IMR-90 (cell line): ENCODE measurements at regions of chr5 and their contacts with region 1.

Region 1: GRCh38 chr5:40904205-40904993 is 4.9 kb upstream of the C7 start:
- DNase-seq: peak; percentile 83
- ATAC-seq: peak; percentile 98
- H3K4me3 ChIP-seq: no peak overlapping the region
- H3K27ac ChIP-seq: no peak overlapping the region
- H3K4me1 ChIP-seq: peaks cover 7% of the 10 kb centered on the region; the same call in 1 of the 2 replicates
- H3K27me3 ChIP-seq: no peaks in the 10 kb centered on the region
- CTCF ChIP-seq: peak; percentile 99
- POLR2A ChIP-seq: peak; percentile 48; the same call in 1 of the 2 replicates
- RAD21 ChIP-seq: peak; percentile 99

Region 2: DNA sequence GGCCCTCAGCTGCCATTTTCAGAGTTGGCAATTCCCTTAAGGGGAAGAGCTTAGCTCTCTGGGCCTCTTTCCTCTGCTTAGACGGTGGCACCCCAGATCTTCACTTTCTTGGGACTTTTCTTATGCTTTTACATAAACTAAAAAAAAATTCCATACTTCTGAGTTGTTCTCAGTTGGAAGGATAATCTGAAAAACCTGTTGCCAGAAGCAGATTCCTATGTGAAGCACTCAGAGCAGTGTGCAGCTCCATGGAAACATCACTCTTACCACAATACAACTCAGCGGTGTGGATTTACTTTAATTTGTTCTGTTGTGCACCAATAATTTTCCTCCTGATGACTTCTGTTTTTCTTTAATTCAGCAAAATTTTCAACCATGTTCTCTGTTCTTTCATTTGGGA is 210.9 kb after region 1 on chr5:
- CTCF ChIA-PET with region 1: interaction called, 5 read pairs
- POLR2A ChIA-PET with region 1: no interaction called
- dilution Hi-C with region 1: no loop called
- in situ Hi-C with region 1: no loop called
- intact Hi-C with region 1: loop called (anchors 1 kb)
- DNase-seq: peak; percentile 94
- ATAC-seq: peak; percentile 75
- H3K4me3 ChIP-seq: no peak overlapping the region
- H3K27ac ChIP-seq: peak overlapping the region; percentile 97
- H3K4me1 ChIP-seq: peaks cover 26% of the 10 kb centered on the region
- H3K27me3 ChIP-seq: no peaks in the 10 kb centered on the region
- CTCF ChIP-seq: no peak
- POLR2A ChIP-seq: no peak
- RAD21 ChIP-seq: no peak

Region 3: DNA sequence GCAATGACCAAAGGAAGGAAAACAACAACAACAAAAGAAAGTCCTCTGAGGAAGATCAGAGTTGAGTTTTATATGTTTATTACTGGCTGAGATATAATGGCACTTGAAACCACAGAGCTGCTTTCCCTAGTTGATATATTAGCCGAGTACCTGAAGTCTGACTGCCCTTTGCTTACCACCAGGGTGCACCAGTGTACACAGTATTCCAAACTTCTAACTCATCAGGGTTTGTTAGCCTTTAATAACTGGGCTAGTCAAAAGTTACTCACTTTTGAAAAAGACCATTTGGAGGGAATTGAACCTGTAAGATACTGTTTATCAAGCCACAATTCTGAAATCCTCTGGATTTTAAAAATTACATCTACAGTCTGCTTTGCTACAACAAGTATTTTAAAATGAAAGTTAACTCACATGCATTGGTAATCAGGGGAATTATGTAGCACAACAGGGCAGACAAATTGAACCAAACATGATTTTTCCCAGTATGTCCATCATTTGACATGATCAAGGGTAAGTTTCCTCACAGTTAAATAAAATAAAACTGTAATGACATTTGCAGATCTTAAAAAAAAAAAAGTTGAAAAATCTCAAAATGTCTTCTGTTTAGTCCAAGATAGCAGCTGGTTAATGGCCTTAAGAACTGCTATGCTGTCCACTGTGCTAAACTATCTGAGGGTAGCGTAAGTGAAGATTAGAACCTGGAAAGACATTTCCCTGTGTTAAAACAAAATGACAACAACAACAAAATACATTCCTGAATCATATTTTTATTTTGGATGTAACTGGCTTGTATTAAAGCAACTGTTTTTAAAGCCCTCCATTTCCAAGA is 366.2 kb after region 1 on chr5:
- CTCF ChIA-PET with region 1: interaction called, 5 read pairs
- POLR2A ChIA-PET with region 1: no interaction called
- dilution Hi-C with region 1: no loop called
- in situ Hi-C with region 1: no loop called
- intact Hi-C with region 1: loop called (anchors 2 kb)
- DNase-seq: peak; percentile 76
- ATAC-seq: peak; percentile 89
- H3K4me3 ChIP-seq: no peak overlapping the region
- H3K27ac ChIP-seq: no peak overlapping the region
- H3K4me1 ChIP-seq: peaks cover 6% of the 10 kb centered on the region
- H3K27me3 ChIP-seq: no peaks in the 10 kb centered on the region
- CTCF ChIP-seq: peak; percentile 80
- POLR2A ChIP-seq: no peak
- RAD21 ChIP-seq: peak; percentile 77

Region 4: GRCh38 chr5:41346609-41347008 is 442.2 kb after region 1 on chr5:
- CTCF ChIA-PET with region 1: interaction called, 9 read pairs
- POLR2A ChIA-PET with region 1: no interaction called
- dilution Hi-C with region 1: no loop called
- in situ Hi-C with region 1: loop called (anchors 10 kb)
- intact Hi-C with region 1: loop called (anchors 2 kb)
- DNase-seq: peak; percentile 49
- ATAC-seq: peak; percentile 59
- H3K4me3 ChIP-seq: no peak overlapping the region
- H3K27ac ChIP-seq: no peak overlapping the region
- H3K4me1 ChIP-seq: no peaks in the 10 kb centered on the region
- H3K27me3 ChIP-seq: no peaks in the 10 kb centered on the region
- CTCF ChIP-seq: peak; percentile 43
- POLR2A ChIP-seq: no peak
- RAD21 ChIP-seq: peak; percentile 46

Region 5: DNA sequence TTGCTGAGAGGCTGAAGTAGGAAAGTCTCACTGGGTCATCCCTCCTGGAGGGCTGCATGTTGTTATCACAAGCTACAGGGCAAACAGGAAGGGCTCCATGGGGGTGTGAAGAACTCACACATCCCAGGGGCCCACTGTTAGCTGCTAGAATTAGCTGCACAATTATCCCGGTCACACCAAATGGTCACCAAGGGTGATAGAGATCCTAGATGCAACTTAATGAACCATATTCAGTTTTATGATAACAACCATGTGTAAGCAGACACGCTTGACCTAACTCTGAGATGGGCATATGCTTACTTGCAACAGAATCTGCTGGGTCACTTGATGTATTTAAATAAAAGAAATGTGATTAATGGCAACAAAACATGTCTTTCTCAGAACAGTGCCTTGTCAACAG is 452.4 kb after region 1 on chr5:
- CTCF ChIA-PET with region 1: no interaction called
- POLR2A ChIA-PET with region 1: no interaction called
- dilution Hi-C with region 1: no loop called
- in situ Hi-C with region 1: no loop called
- intact Hi-C with region 1: no loop called
- DNase-seq: no peak
- ATAC-seq: no peak
- H3K4me3 ChIP-seq: no peak overlapping the region
- H3K27ac ChIP-seq: no peak overlapping the region
- H3K4me1 ChIP-seq: no peaks in the 10 kb centered on the region
- H3K27me3 ChIP-seq: no peaks in the 10 kb centered on the region
- CTCF ChIP-seq: no peak
- POLR2A ChIP-seq: no peak
- RAD21 ChIP-seq: no peak

Region 6: GRCh38 chr5:41524174-41524573 is 619.8 kb after region 1 on chr5:
- CTCF ChIA-PET with region 1: no interaction called
- POLR2A ChIA-PET with region 1: no interaction called
- dilution Hi-C with region 1: no loop called
- in situ Hi-C with region 1: no loop called
- intact Hi-C with region 1: loop called (anchors 5 kb)
- DNase-seq: no peak
- ATAC-seq: no peak
- H3K4me3 ChIP-seq: no peak overlapping the region
- H3K27ac ChIP-seq: no peak overlapping the region
- H3K4me1 ChIP-seq: peaks cover 3% of the 10 kb centered on the region; the same call in 1 of the 2 replicates
- H3K27me3 ChIP-seq: no peaks in the 10 kb centered on the region
- CTCF ChIP-seq: no peak
- POLR2A ChIP-seq: no peak
- RAD21 ChIP-seq: peak; percentile 27; the same call in 1 of the 2 replicates

Region 7: DNA sequence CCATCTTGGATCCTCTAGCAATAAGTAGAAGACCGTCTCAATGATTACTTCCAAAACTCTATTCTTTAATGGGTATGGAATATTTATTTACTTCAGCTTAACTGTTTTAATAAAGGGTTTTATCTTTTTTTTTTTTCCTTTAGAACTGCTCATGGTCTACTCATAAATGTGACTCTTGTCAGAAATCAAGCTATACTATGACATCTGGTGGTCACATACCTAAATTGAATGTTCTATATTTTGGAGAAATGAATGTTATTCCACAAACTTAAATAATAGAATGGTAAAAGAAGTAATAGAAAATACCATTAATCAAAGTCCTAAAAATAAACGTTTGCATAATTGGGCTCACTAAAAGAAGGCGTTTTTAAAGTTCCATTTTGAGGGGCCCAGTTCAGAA is 737.2 kb after region 1 on chr5:
- CTCF ChIA-PET with region 1: interaction called, 15 read pairs
- POLR2A ChIA-PET with region 1: no interaction called
- dilution Hi-C with region 1: no loop called
- in situ Hi-C with region 1: loop called (anchors 25 kb)
- intact Hi-C with region 1: loop called (anchors 1 kb)
- DNase-seq: peak; percentile 16
- ATAC-seq: no peak
- H3K4me3 ChIP-seq: no peak overlapping the region
- H3K27ac ChIP-seq: no peak overlapping the region
- H3K4me1 ChIP-seq: no peaks in the 10 kb centered on the region
- H3K27me3 ChIP-seq: no peaks in the 10 kb centered on the region
- CTCF ChIP-seq: peak; percentile 39
- POLR2A ChIP-seq: no peak
- RAD21 ChIP-seq: peak; percentile 51

Region 8: DNA sequence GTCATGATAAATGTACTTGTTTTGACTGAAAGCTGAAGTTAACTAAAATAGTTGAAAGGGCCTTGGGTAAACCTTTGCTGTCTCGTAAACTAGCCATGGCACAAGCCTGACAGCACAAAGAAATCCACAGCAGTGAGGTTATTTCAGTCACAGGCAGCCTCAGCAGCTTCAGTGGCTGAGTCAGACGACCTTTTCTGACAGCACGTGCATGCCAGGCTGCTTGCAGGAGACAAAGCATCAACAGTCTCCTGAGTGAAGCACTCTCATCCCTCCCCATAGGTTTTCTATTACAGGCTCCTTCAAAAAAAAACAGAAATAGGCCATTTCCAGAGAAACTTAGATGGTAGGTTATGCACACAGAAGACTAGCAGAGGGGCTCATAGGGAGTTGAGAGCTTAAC is 931.2 kb after region 1 on chr5:
- CTCF ChIA-PET with region 1: no interaction called
- POLR2A ChIA-PET with region 1: no interaction called
- dilution Hi-C with region 1: no loop called
- in situ Hi-C with region 1: loop called (anchors 10 kb)
- intact Hi-C with region 1: no loop called
- DNase-seq: peak; percentile 92
- ATAC-seq: peak; percentile 98
- H3K4me3 ChIP-seq: no peak overlapping the region
- H3K27ac ChIP-seq: peak overlapping the region; percentile 22; the same call in 1 of the 2 replicates
- H3K4me1 ChIP-seq: peaks cover 7% of the 10 kb centered on the region
- H3K27me3 ChIP-seq: no peaks in the 10 kb centered on the region
- CTCF ChIP-seq: no peak
- POLR2A ChIP-seq: no peak
- RAD21 ChIP-seq: peak; percentile 28; the same call in 1 of the 2 replicates